Spleen (tissue), 13 donors: ENCODE measurements at regions of chr11 and their contacts with region 1.

Region 1: GRCh38 chr11:116454020-116454645 is 318.7 kb downstream of the BUD13 start:
- DNase-seq: no peak
- H3K4me3 ChIP-seq: no peak overlapping the region
- H3K27ac ChIP-seq: no peak overlapping the region
- H3K4me1 ChIP-seq: no peaks in the 10 kb centered on the region
- H3K27me3 ChIP-seq: peaks cover 0 to 7% (median 0%) of the 10 kb centered on the region in 7 donors
- CTCF ChIP-seq: peak in 7 of 11 experiments; percentile 6 to 45 (median 18)
- POLR2A ChIP-seq: no peak

Region 2: GRCh38 chr11:116691771-116692177 is 237.6 kb after region 1 on chr11:
- intact Hi-C with region 1: loop called (anchors 5 kb)
- DNase-seq: peak; percentile 81
- H3K4me3 ChIP-seq: no peak overlapping the region
- H3K27ac ChIP-seq: no peak overlapping the region
- H3K4me1 ChIP-seq: peaks cover 0 to 6% (median 0%) of the 10 kb centered on the region in 6 donors
- H3K27me3 ChIP-seq: peaks cover 0 to 42% (median 0%) of the 10 kb centered on the region in 7 donors
- CTCF ChIP-seq: peak; percentile 61 to 85 (median 81)
- POLR2A ChIP-seq: no peak